A673 (cell line): ENCODE measurements at regions of chr4 and their contacts with region 1.

Region 1: DNA sequence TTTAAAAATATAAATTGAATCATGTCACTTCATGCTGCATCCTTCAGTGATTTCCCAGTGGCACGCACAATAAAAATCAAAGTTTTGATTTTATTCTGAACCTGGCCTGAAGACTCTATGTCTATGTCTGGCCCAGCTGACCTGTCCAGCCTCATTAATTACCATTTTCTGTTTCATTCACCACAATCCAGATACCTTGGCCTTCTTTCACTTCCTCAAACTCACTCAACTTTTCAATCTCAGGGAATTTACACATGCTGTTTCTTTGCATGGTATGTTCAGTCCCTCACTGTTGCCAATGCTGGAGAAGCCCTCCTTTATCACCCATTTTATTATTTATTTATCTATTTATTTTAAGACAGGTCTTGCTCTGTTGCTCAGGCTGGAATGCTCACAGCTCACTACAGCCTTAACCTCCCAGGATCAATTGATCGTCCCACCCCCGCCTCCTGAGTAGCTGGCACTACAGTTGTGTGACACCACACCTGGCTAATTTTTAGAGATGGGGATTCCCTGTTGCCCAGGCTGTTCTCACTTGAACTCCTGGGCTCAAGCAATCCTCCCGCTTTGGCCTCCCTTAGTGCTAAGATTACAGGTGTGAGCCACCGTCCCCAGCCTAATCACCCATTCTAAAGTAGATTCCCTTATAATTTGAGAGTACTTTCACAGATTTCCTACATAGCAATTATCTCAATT is 43.1 kb downstream of the ZGRF1 start:
- DNase-seq: no peak
- H3K4me3 ChIP-seq: no peak overlapping the region
- H3K27ac ChIP-seq: no peak overlapping the region
- H3K4me1 ChIP-seq: no peaks in the 10 kb centered on the region
- H3K27me3 ChIP-seq: no peaks in the 10 kb centered on the region
- CTCF ChIP-seq: no peak

Region 2: DNA sequence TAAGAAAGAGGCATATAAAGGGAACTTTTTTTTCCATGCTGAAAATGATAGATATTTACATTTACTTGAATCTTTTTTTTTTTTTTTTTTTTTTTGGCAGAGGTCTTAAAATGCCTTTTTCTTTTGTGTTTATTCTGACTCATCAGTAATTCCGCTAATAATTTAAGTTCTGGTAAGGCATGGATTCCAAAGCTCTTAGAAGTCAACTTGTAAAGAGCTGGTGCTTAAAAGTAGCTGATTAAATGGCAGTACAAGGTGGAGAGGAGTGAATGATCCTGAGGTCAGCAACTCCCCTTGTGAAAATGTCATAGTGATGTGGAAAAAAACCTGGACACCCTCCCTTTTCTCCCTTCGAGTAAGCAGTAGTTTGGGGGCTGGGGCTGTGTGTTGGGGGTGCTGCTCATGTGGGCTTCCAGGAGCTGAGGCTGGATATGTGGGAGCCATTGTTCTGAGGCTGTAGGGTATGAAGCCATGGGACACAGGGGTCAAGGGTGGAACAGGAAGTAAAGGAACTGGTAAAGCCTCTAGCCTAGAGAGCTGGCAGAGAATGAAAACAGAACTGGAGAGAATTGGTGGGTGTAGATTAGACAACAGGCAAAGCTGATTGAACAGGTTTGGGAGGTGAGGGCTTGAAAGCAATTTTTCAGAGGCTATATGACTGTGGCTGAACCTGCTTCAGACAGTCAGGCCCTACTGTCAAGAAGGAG is 1929.7 kb before region 1 on chr4:
- CTCF ChIA-PET with region 1: no interaction called
- POLR2A ChIA-PET with region 1: no interaction called
- intact Hi-C with region 1: no loop called
- DNase-seq: peak; percentile 19
- H3K4me3 ChIP-seq: no peak overlapping the region
- H3K27ac ChIP-seq: no peak overlapping the region
- H3K4me1 ChIP-seq: no peaks in the 10 kb centered on the region
- H3K27me3 ChIP-seq: no peaks in the 10 kb centered on the region
- CTCF ChIP-seq: no peak

Region 3: GRCh38 chr4:111960241-111960667 is 633.3 kb before region 1 on chr4:
- CTCF ChIA-PET with region 1: no interaction called
- POLR2A ChIA-PET with region 1: no interaction called
- intact Hi-C with region 1: no loop called
- DNase-seq: peak; percentile 27
- H3K4me3 ChIP-seq: no peak overlapping the region
- H3K27ac ChIP-seq: no peak overlapping the region
- H3K4me1 ChIP-seq: no peaks in the 10 kb centered on the region
- H3K27me3 ChIP-seq: no peaks in the 10 kb centered on the region
- CTCF ChIP-seq: no peak

Region 4: GRCh38 chr4:112560084-112560483 is 33.5 kb before region 1 on chr4:
- CTCF ChIA-PET with region 1: no interaction called
- POLR2A ChIA-PET with region 1: interaction called, 10 read pairs
- intact Hi-C with region 1: no loop called
- DNase-seq: no peak
- H3K4me3 ChIP-seq: no peak overlapping the region
- H3K27ac ChIP-seq: no peak overlapping the region
- H3K4me1 ChIP-seq: no peaks in the 10 kb centered on the region
- H3K27me3 ChIP-seq: no peaks in the 10 kb centered on the region
- CTCF ChIP-seq: no peak